ENCODE measurements at regions of chr14 and their contacts with region 1.

Region 1: GRCh38 chr14:73458151-73458976 is at the start of gene NUMB:
- DNase-seq: peak; percentile 93 to 98
- H3K4me3 ChIP-seq: peak within 1 kb of the TSS; percentile 80 to 97 (median 88)
- H3K27ac ChIP-seq: peak within 1 kb of the TSS; percentile 56
- H3K4me1 ChIP-seq: peaks cover 0 to 7% (median 3%) of the 10 kb centered on the region in 4 experiments; a peak in 3 of 7 replicates
- H3K27me3 ChIP-seq: no peaks in the 10 kb centered on the region
- CTCF ChIP-seq: no peak
- EP300 ChIP-seq: no peak
- POLR2A ChIP-seq: peak; percentile 77 to 88; a peak in 2 of 3 replicates
- RAD21 ChIP-seq: no peak
- total RNA-seq, gene NUMB: 44.3 and 54.3 TPM in 2 replicates

Region 2: DNA sequence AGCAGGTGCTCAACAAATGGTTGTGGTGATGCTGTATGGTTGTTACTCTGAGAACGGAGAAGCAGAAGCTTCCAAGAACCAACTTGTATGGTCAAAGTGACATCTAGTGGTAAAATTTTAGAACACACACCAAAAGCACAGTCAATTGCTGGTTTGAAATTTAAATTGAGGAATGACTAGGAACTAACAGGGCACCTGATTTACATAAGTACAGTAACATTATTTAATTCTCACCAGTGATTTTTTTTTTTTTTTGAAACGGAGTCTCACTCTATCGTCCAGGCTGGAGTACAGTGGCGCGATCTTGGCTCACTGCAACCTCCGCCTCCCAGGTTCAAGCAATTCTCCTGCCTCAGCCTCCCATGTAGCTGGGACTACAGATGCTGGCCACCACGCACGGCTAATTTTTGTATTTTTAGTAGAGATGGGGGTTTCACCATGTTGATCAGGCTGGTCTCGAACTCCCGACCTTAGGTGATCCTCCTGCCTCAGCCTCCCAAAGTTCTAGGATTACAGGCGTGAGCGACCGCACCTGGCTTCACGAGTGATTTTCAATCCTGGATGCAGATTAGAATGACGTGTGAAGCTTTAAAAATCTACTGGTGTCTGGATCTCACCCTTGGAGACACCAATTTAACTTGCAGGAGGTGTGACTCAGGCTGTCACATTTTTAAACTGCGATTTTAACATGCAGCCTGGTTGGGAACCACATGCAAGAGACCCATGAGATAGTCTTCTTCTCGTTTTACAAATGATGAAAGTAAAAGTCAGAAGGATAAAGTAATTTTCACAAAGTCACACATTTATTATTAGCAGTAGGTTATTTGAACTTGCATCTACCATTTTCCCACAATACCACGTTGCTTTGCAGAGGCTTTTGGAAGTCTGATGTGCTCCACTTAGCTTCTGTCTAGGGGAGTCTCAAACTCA is 14.1 kb after region 1 on chr14:
- CTCF ChIA-PET with region 1: interaction called, 24 read pairs
- POLR2A ChIA-PET with region 1: interaction called, 5 read pairs
- DNase-seq: no peak
- H3K4me3 ChIP-seq: no peak overlapping the region
- H3K27ac ChIP-seq: no peak overlapping the region
- H3K4me1 ChIP-seq: no peaks in the 10 kb centered on the region
- H3K27me3 ChIP-seq: no peaks in the 10 kb centered on the region
- CTCF ChIP-seq: peak in 2 of 3 experiments; percentile 67 to 78; a peak in 3 of 4 replicates
- EP300 ChIP-seq: no peak
- POLR2A ChIP-seq: no peak
- RAD21 ChIP-seq: peak; percentile 95 to 96

Measured in H1 (cell line).